ENCODE measurements at regions of chr19 and their contacts with region 1.

Region 1: GRCh38 chr19:34096020-34096915 is 76.0 kb upstream of the LSM14A start:
- DNase-seq: peak; percentile 69
- H3K4me3 Mint-ChIP-seq: no peak overlapping the region
- H3K27ac Mint-ChIP-seq: no peak overlapping the region
- H3K4me1 Mint-ChIP-seq: no peaks in the 10 kb centered on the region
- H3K27me3 Mint-ChIP-seq: peaks cover 28% of the 10 kb centered on the region
- CTCF ChIP-seq: peak; percentile 65

Region 2: GRCh38 chr19:33795370-33796163 is 300.7 kb before region 1 on chr19:
- CTCF ChIA-PET with region 1: interaction called, 22 read pairs
- POLR2A ChIA-PET with region 1: interaction called, 3 read pairs
- intact Hi-C with region 1: loop called (anchors 1 kb)
- DNase-seq: peak; percentile 89
- H3K4me3 Mint-ChIP-seq: peak overlapping the region; percentile 77
- H3K27ac Mint-ChIP-seq: peak overlapping the region; percentile 75
- H3K4me1 Mint-ChIP-seq: no peaks in the 10 kb centered on the region
- H3K27me3 Mint-ChIP-seq: no peaks in the 10 kb centered on the region
- CTCF ChIP-seq: peak; percentile 91

Region 3: GRCh38 chr19:34067861-34068271 is 28.4 kb before region 1 on chr19:
- CTCF ChIA-PET with region 1: interaction called, 18 read pairs
- POLR2A ChIA-PET with region 1: no interaction called
- intact Hi-C with region 1: no loop called
- DNase-seq: peak; percentile 5
- H3K4me3 Mint-ChIP-seq: no peak overlapping the region
- H3K27ac Mint-ChIP-seq: no peak overlapping the region
- H3K4me1 Mint-ChIP-seq: no peaks in the 10 kb centered on the region
- H3K27me3 Mint-ChIP-seq: peaks cover 12% of the 10 kb centered on the region
- CTCF ChIP-seq: no peak

Region 4: DNA sequence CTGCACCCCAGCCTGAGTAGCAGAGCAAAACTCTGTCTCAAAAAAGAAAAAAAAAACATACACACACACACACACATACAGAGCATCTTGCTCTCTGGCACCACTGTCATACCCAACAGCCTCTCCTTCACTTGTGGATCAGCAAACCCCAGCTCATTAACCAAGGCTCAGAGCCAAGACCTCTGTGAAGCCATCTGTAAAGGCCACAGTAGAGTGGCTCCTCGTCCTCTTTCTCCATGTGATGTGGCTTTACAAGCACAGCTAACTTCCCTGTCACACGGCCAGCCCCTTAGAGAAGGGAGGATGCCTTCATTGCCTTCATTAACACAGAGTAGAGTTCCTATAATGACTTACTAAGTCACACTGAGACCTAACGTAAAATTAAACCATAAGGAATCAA is 13.3 kb after region 1 on chr19:
- CTCF ChIA-PET with region 1: interaction called, 30 read pairs
- POLR2A ChIA-PET with region 1: no interaction called
- intact Hi-C with region 1: no loop called
- DNase-seq: no peak
- H3K4me3 Mint-ChIP-seq: no peak overlapping the region
- H3K27ac Mint-ChIP-seq: no peak overlapping the region
- H3K4me1 Mint-ChIP-seq: no peaks in the 10 kb centered on the region
- H3K27me3 Mint-ChIP-seq: peaks cover 10% of the 10 kb centered on the region
- CTCF ChIP-seq: no peak